ENCODE measurements at regions of chr3 and their contacts with region 1.

Region 1: GRCh38 chr3:67790043-67790442 is 135.6 kb upstream of the SUCLG2 start:
- DNase-seq: peak; percentile 71
- H3K4me3 Mint-ChIP-seq: no peak overlapping the region
- H3K27ac Mint-ChIP-seq: no peak overlapping the region
- H3K4me1 Mint-ChIP-seq: peaks cover 14% of the 10 kb centered on the region
- H3K27me3 Mint-ChIP-seq: no peaks in the 10 kb centered on the region

Region 2: DNA sequence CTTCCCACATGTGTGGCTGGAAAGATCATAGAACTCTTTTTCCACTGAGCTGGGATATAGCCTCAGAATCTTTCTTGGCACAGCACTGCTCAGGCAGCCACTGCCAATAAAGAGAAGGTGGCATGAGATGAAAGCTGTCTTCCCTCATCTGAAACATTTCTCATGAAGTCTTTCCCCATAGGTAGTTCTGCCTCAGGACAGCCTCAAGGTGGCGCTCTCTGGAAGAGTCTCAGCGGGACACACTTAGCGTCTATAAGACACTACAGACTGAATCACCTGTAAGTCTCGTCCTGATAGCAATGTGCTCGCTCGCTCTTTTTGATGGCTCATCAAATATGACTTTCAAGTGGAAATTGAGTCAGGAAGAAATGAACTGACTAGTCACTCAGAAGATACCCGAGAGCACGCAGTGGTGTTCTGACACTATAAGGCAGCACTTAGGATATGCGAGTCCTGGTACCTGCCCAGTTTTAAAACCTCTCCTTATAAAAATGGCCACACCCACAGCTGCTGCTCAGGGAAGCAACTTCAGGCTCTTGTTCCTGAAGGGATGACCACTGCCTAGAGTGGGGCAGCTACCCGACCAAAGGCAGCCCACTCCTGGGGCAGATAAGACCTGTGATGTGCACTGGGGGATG is 405.2 kb before region 1 on chr3:
- CTCF ChIA-PET with region 1: interaction called, 87 read pairs
- DNase-seq: peak; percentile 64
- H3K4me3 Mint-ChIP-seq: no peak overlapping the region
- H3K27ac Mint-ChIP-seq: no peak overlapping the region
- H3K4me1 Mint-ChIP-seq: no peaks in the 10 kb centered on the region
- H3K27me3 Mint-ChIP-seq: no peaks in the 10 kb centered on the region

Region 3: DNA sequence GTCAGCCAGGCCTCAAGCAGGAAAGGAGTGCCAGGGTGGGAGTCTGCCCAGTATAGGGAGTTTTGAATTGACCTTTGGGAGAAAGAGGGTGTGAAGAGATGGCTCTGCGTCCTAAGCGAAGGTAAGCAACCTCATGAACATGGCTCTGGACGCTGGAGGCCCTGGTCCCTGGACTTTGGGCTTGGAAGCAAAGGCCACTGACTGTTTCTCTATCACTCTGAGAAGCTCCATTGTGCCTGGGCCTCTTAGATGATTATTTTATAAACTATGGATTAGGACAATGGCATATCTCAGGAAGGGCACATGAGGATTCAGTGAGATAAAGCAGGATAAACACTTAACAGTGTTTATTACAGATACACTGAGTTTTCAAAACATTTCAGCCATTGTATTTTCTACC is 194.6 kb before region 1 on chr3:
- CTCF ChIA-PET with region 1: interaction called, 11 read pairs
- DNase-seq: no peak
- H3K4me3 Mint-ChIP-seq: no peak overlapping the region
- H3K27ac Mint-ChIP-seq: no peak overlapping the region
- H3K4me1 Mint-ChIP-seq: peaks cover 46% of the 10 kb centered on the region
- H3K27me3 Mint-ChIP-seq: no peaks in the 10 kb centered on the region

Measured in activated naive CD4-positive, alpha-beta T cell treated with anti-CD3 and anti-CD28 coated beads, Interleukin-2, amount 10 ng/mL, durations not matched to agents 7 days and 5 days (primary cell).